ENCODE measurements at regions of chr5 and their contacts with region 1.

Region 1: GRCh38 chr5:36177715-36178523 is 26.0 kb downstream of the SKP2 start:
- DNase-seq: no peak
- H3K4me3 Mint-ChIP-seq: no peak overlapping the region
- H3K27ac Mint-ChIP-seq: no peak overlapping the region
- H3K4me1 Mint-ChIP-seq: no peaks in the 10 kb centered on the region
- H3K27me3 Mint-ChIP-seq: no peaks in the 10 kb centered on the region
- CTCF ChIP-seq: peak; percentile 18

Region 2: DNA sequence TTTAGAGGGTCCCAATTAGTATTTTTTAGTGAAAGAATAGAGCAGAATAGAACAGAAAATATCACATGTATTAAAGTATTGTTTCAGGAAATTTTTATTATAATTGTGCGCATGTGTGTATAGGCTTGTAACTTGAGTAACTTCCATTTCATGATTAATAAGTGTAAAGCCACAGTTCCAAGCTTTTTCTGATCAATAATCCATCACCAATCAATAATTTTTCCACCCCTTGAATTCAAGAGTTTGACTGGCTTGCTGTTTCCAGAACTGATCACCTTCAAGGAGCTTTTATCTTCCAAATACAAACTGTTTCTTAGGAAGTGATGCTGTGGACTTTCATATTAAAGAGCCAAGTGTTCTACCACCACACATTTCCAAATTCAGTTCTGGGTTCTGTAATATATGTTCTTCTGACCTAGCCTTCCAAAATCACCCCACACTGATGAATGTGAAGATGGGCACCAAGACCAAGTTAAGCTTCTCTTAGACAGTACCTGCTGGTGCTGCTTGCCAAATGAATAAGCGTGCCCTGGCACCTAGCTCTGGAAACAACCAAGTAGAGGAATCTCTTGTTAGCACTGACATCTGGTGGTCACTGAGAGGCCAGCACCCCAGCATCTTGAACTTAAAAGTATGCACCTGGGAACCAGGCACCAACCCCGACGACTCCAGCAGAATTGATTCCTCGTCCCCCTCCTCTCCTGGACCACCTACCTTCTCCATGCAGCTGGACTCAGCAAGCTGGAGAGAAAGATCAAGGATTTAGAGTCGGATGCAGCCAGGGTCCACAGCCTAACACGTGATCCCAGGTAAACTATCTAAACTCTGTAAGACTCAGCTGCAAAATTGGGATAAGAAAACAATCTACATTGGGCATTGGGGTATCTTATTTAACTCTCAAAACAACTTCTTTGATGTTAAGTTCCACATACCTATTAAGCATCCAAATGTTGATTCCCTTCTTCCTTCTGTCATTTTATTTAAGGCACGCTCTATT is 518.1 kb after region 1 on chr5:
- CTCF ChIA-PET with region 1: interaction called, 9 read pairs
- intact Hi-C with region 1: loop called (anchors 2 kb)
- DNase-seq: peak; percentile 65
- H3K4me3 Mint-ChIP-seq: no peak overlapping the region
- H3K27ac Mint-ChIP-seq: no peak overlapping the region
- H3K4me1 Mint-ChIP-seq: peaks cover 1% of the 10 kb centered on the region
- H3K27me3 Mint-ChIP-seq: peaks cover 36% of the 10 kb centered on the region
- CTCF ChIP-seq: peak; percentile 69